ENCODE measurements at regions of chr5 and their contacts with region 1.

Region 1: DNA sequence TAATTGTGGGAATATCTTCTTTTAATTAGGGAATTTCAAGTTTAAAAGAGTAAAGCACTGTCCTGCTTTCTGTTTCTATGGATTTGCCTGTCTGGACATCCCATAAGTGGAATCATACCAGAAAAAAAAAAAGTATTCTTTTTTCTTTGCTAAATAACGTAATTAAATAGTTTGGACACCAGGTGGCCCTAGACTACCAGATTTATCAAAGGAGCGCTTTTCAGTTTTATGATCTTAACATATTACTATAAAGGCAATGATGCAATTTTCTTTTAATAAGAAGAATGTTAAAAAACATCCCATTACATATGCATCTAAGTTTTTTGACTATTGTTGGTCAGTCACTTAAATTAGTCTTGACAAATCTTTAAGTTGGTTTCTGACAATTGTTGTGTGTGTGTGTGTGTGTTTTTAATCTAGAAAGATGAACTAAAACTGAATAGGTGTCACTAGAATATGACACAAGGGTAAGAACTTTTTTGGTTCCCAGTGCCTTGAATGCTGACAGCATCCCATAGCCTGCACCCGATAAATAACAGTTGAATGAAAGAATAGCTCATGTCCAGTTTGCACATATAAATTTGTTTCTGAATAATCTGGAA is 49.5 kb downstream of the C5orf22 start:
- DNase-seq: no peak
- H3K4me3 ChIP-seq: no peak overlapping the region
- H3K27ac ChIP-seq: no peak overlapping the region
- H3K4me1 ChIP-seq: no peaks in the 10 kb centered on the region
- H3K27me3 ChIP-seq: no peaks in the 10 kb centered on the region
- CTCF ChIP-seq: peak in 2 of 3 donors; percentile 44 to 60
- POLR2A ChIP-seq: no peak

Region 2: GRCh38 chr5:31809050-31809870 is 227.7 kb after region 1 on chr5:
- intact Hi-C with region 1: loop called (anchors 10 kb)
- DNase-seq: peak; percentile 42 to 63
- H3K4me3 ChIP-seq: no peak overlapping the region
- H3K27ac ChIP-seq: no peak overlapping the region
- H3K4me1 ChIP-seq: no peaks in the 10 kb centered on the region
- H3K27me3 ChIP-seq: no peaks in the 10 kb centered on the region
- CTCF ChIP-seq: peak in 2 of 3 donors; percentile 58 to 68
- POLR2A ChIP-seq: no peak

Region 3: GRCh38 chr5:32163785-32164184 is 582.2 kb after region 1 on chr5:
- intact Hi-C with region 1: no loop called
- DNase-seq: no peak
- H3K4me3 ChIP-seq: no peak overlapping the region
- H3K27ac ChIP-seq: no peak overlapping the region
- H3K4me1 ChIP-seq: peaks cover 0 to 4% of the 10 kb centered on the region in 2 donors
- H3K27me3 ChIP-seq: no peaks in the 10 kb centered on the region
- CTCF ChIP-seq: no peak
- POLR2A ChIP-seq: no peak